Heart right ventricle (tissue), 16 donors: ENCODE measurements at regions of chr12 and their contacts with region 1.

Region 1: DNA sequence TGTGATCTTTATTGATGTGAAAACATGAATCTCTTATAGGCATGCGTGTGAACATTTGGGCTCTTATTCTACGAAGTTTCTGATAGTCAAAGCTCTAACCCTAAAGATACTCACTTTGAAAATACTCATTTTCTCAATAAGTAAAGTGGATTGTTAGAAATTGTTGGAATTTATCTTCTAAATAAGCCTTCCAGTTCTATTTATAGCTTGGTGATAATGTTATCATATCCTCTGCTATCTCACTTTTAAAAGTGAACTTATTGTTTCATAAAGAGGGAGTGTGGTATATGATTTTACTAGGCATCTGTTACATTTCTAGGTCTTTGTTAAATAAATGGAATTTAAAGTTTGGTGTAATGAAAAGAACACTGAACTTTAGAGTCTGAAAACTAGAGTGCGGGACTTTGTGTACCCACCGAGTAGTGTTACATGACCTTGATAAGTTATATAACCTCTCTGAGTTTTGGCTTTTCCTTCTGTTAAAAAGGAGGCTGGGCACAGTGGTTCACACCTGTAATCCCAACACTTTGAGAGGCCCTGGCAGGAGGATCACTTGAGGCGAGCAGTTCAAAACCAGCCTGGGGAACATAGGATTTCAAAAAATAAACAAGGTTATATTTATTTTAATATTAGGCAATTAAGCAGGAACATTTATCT is 13.6 kb downstream of the USP15 start:
- DNase-seq: no peak
- ATAC-seq: peak in 2 of 8 donors; percentile 42 to 73
- H3K4me3 ChIP-seq: no peak overlapping the region
- H3K27ac ChIP-seq: peak overlapping the region in 1 of 10 donors; percentile 30
- H3K4me1 ChIP-seq: peaks cover 0 to 92% (median 81%) of the 10 kb centered on the region in 9 donors
- H3K27me3 ChIP-seq: no peaks in the 10 kb centered on the region
- CTCF ChIP-seq: no peak

Region 2: GRCh38 chr12:61521258-61521657 is 752.6 kb before region 1 on chr12:
- intact Hi-C with region 1: no loop called
- DNase-seq: no peak
- ATAC-seq: no peak
- H3K4me3 ChIP-seq: no peak overlapping the region
- H3K27ac ChIP-seq: no peak overlapping the region
- H3K4me1 ChIP-seq: no peaks in the 10 kb centered on the region
- H3K27me3 ChIP-seq: no peaks in the 10 kb centered on the region
- CTCF ChIP-seq: no peak

Region 3: DNA sequence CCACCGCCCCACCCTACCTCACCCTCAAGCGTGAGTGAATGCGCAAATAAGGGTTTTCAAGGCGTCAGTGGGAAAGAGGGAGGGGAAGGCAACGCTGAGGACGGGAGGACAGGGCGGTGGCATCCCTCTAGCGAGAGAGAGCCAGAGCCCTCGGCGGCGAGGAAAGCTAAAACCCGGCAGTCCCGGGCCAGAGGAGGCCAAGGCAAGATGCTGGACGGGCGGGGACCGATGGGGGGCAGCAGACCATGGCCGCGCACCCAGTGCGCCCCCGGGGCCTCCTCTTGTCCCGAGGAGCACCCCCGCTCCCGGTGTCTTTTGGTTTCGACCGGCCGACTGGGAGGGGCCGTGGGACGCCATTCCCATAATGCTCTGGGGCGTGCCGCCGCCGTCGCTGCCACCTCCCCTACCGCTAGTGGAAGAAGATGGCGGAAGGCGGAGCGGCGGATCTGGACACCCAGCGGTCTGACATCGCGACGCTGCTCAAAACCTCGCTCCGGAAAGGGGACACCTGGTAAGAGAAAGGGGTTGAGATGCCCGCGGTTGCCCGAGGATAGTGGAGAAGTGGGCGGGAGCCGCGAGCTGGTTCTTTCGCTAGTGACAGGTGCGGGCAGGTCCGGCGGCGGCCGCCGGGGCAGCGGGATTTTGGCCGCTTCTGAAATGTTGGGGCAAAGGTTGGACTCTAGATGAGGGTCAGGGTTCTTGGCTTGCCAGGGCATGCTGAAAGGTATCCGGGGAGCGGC is 13.7 kb before region 1 on chr12 and contains the start of gene USP15:
- intact Hi-C with region 1: no loop called
- DNase-seq: peak; percentile 97 to 98
- ATAC-seq: peak; percentile 97 to 99 (median 98)
- H3K4me3 ChIP-seq: peak within 1 kb of the TSS; percentile 72 to 99 (median 92)
- H3K27ac ChIP-seq: peak within 1 kb of the TSS; percentile 80 to 98 (median 93)
- H3K4me1 ChIP-seq: peaks cover 0 to 75% (median 48%) of the 10 kb centered on the region in 9 donors
- H3K27me3 ChIP-seq: no peaks in the 10 kb centered on the region
- CTCF ChIP-seq: peak; percentile 78 to 96 (median 82)
- total RNA-seq, gene USP15: 52.5 to 76.0 (median 63.9) TPM

Region 4: DNA sequence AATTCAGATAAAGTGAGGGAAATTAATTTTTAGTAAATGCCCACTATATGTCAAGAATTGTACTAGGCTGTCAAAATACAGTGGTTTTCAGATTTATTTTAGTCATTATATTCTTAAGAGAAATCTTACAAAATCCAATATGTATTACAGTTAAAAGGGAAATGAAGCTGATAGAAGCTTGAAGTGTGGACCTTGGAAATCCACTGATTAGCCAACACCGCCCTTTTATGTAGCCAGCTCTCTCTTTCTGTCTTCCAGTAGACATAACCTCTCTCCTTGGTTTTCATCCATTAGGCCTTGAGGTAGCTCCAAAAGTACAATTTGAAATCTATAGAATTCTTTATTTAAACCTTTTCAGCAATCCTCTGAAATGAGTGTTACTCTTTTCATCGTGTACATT is 49.5 kb after region 1 on chr12:
- intact Hi-C with region 1: no loop called
- DNase-seq: no peak
- ATAC-seq: no peak
- H3K4me3 ChIP-seq: no peak overlapping the region
- H3K27ac ChIP-seq: no peak overlapping the region
- H3K4me1 ChIP-seq: peaks cover 0 to 16% (median 0%) of the 10 kb centered on the region in 9 donors
- H3K27me3 ChIP-seq: no peaks in the 10 kb centered on the region
- CTCF ChIP-seq: no peak

Region 5: DNA sequence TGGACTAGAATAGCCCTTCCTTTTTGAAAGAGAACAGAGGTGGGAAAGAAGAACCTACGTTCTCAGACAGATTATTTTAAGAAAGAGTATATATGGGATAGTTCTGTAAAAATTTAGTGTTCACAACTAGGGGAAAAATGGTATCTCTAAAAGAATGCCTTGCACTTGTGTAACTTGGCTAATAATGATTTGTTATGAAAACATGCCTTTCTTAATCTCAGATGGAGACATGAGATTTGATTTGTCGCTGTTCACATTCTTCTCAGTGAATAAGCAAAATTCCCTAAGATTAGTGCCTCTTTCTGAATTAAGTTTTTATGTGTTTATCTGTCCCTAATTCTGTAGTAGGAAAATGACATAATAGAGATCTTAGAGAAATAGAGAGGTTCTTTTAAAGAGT is 87.2 kb after region 1 on chr12:
- intact Hi-C with region 1: loop called in 2 of 10 experiments (anchors 10 kb)
- DNase-seq: no peak
- ATAC-seq: no peak
- H3K4me3 ChIP-seq: no peak overlapping the region
- H3K27ac ChIP-seq: no peak overlapping the region
- H3K4me1 ChIP-seq: no peaks in the 10 kb centered on the region
- H3K27me3 ChIP-seq: no peaks in the 10 kb centered on the region
- CTCF ChIP-seq: no peak

Region 6: DNA sequence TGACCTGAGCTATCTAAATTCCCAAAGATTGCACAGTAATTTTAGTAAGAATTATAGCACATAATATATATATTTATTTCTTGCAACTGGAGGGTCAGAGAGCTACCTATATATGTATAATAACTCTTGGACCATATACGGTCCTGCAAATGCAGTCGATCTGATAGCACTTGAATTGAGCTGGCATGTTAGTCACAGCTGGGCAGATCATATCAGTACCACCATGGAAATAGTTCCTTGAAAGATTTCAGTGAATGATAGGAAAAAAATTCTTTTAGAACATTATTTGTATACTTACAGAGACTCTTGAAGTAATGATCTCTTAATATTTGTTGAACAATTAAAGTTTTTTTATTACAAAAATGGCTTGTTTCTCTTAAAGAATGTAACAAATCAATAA is 98.3 kb after region 1 on chr12:
- intact Hi-C with region 1: loop called in 5 of 10 experiments (anchors 5 to 10 kb)
- DNase-seq: no peak
- ATAC-seq: peak in 2 of 8 donors; percentile 33 to 37
- H3K4me3 ChIP-seq: no peak overlapping the region
- H3K27ac ChIP-seq: peak overlapping the region in 6 of 10 donors; percentile 2 to 69 (median 58)
- H3K4me1 ChIP-seq: peaks cover 0 to 38% (median 25%) of the 10 kb centered on the region in 9 donors
- H3K27me3 ChIP-seq: no peaks in the 10 kb centered on the region
- CTCF ChIP-seq: no peak